Uterus (tissue), 4 donors: ENCODE measurements at regions of chr18 and their contacts with region 1.

Region 1: GRCh38 chr18:21727702-21728101 is 12.9 kb upstream of the MIB1 start:
- DNase-seq: no peak
- H3K4me3 ChIP-seq: no peak overlapping the region
- H3K27ac ChIP-seq: no peak overlapping the region
- H3K4me1 ChIP-seq: no peaks in the 10 kb centered on the region
- H3K27me3 ChIP-seq: no peaks in the 10 kb centered on the region
- CTCF ChIP-seq: no peak
- POLR2A ChIP-seq: no peak

Region 2: DNA sequence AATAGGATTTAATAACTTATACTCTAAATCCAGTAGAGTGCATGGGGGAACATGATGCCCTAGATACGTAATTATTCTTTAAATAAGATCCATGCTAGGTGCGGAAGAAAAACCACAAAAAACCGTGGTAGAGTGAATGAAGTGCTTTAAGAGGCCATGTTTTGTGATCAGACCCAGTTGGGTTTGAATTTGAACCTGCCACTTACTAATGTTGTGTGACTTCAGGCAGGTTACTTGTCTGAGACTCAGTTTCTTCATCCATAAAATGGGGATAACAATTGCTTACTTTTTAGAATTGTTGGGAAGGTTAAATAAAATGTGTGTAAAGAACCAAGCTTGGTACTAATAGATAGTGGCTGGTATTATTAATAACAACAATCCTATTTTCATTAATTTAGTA is 30.1 kb after region 1 on chr18:
- intact Hi-C with region 1: no loop called
- DNase-seq: no peak
- H3K4me3 ChIP-seq: no peak overlapping the region
- H3K27ac ChIP-seq: no peak overlapping the region
- H3K4me1 ChIP-seq: peaks cover 0 to 6% of the 10 kb centered on the region in 2 donors
- H3K27me3 ChIP-seq: no peaks in the 10 kb centered on the region
- CTCF ChIP-seq: no peak
- POLR2A ChIP-seq: no peak

Region 3: DNA sequence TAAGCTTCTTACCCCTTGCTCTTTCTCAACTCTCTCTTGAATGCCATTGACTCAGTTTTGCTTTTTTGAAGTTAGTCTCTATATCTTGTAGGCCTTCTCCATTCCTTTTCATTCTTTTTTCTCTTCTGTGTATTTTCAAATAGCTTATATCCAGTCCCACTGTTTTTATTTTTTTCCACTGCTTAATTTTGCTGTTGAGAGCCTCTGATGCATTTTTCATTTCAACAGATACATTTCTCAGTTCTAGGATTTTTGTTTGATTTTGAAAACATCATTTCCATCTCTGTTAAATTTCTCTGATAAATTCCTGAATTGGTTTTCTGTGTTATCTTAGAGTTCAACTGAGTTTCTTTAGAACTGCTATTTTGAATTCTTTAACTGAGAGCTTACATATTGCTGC is 58.8 kb after region 1 on chr18:
- intact Hi-C with region 1: no loop called
- DNase-seq: no peak
- H3K4me3 ChIP-seq: no peak overlapping the region
- H3K27ac ChIP-seq: no peak overlapping the region
- H3K4me1 ChIP-seq: no peaks in the 10 kb centered on the region
- H3K27me3 ChIP-seq: no peaks in the 10 kb centered on the region
- CTCF ChIP-seq: no peak
- POLR2A ChIP-seq: no peak

Region 4: DNA sequence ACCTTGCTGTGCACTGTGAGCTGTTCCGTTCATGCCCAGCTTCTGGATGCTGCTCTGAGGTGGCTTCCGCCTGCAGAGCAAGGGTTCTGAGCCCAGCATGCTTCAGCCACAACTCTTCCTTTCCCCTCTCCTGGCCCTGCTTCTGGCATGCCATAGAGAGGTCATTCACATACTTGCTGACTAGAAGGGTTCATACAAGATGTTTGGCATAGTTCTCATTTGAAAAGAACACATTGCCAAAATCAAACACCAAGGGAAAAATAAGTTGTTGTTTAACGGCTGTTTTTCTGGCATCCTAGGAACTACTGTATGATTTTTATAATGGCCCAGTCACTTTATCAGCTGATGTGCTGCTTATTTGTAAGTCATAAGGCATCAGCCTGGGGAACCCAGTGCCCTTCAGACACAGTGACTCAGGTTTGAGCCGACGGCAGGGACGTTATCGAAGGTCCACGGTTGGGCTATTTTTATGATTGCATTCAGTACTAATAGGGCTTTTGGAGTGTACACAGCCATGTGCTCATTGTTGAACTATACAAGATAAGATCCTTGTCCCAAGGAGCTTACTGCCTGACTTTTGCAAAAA is 743.9 kb after region 1 on chr18:
- intact Hi-C with region 1: loop called (anchors 5 kb)
- DNase-seq: no peak
- H3K4me3 ChIP-seq: no peak overlapping the region
- H3K27ac ChIP-seq: peak overlapping the region; percentile 61 to 70
- H3K4me1 ChIP-seq: peaks cover 9 to 19% of the 10 kb centered on the region in 2 donors
- H3K27me3 ChIP-seq: no peaks in the 10 kb centered on the region
- CTCF ChIP-seq: no peak
- POLR2A ChIP-seq: no peak